ENCODE measurements at regions of chr14 and their contacts with region 1.

Region 1: DNA sequence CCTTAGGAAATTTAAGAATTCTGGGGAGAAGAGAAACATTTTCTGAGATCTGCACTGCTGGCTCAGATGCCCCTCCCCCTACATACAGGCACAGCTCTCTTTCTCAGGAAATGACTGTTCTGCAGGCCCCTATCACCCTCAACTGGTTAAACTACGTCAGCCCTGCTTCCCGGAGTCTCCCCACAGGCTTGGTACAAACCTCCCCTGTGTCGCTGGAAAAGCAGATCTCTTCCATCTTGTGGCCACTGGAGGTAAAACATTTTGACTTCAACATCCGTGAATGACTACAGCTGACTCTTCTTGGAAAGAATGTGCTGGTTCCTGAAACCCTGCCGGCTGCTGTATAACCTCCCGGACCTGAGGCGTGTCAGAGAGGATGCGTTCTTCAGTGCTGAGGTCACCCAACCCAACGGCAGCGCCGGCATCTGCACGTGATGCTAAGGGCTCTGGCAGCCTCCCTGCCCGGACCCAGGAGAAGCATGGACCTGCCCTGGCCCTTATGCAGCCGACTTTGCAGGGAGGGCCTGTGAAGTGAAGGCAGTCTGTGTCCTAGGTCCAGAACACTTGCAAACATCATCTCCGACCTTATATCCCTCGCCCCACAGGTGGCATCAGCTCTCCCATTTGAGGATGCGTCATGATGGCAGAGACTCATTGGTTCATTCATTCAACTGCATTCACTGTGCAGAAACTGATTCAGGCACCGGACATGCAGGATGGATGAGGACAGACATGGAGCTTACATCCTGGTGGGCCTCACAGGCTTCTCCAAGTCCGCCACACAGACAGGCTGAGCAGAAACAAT is 129.3 kb downstream of the GCH1 start:
- DNase-seq: peak; percentile 92
- ATAC-seq: peak; percentile 84
- H3K4me3 Mint-ChIP-seq: peak overlapping the region; percentile 63
- H3K27ac Mint-ChIP-seq: peak overlapping the region; percentile 93
- H3K4me1 Mint-ChIP-seq: peaks cover 60% of the 10 kb centered on the region
- H3K27me3 Mint-ChIP-seq: peaks cover 10% of the 10 kb centered on the region

Region 2: DNA sequence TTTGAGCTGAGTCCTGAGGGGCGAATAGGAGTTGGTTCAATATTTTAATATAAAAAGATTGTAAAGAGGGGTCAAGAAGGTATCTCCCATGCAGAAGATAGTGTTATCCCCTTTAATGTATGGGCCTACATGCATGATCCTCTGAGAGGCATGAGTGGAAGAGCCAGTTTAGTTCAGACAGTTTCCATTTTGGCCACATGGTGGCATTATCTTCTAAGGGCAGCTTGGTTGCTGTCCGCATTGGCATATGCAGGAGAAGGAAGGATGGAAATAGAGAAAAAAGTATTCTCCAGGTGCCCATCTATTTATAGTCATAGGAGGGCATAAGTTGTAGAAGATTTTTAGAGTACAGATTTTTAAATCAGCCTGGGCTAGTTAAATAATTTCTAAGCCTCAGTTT is 201.1 kb before region 1 on chr14:
- CTCF ChIA-PET with region 1: interaction called, 318 read pairs
- POLR2A ChIA-PET with region 1: interaction called, 20 read pairs
- DNase-seq: peak; percentile 48
- ATAC-seq: no peak
- H3K4me3 Mint-ChIP-seq: no peak overlapping the region
- H3K27ac Mint-ChIP-seq: no peak overlapping the region
- H3K4me1 Mint-ChIP-seq: peaks cover 12% of the 10 kb centered on the region
- H3K27me3 Mint-ChIP-seq: peaks cover 15% of the 10 kb centered on the region

Region 3: DNA sequence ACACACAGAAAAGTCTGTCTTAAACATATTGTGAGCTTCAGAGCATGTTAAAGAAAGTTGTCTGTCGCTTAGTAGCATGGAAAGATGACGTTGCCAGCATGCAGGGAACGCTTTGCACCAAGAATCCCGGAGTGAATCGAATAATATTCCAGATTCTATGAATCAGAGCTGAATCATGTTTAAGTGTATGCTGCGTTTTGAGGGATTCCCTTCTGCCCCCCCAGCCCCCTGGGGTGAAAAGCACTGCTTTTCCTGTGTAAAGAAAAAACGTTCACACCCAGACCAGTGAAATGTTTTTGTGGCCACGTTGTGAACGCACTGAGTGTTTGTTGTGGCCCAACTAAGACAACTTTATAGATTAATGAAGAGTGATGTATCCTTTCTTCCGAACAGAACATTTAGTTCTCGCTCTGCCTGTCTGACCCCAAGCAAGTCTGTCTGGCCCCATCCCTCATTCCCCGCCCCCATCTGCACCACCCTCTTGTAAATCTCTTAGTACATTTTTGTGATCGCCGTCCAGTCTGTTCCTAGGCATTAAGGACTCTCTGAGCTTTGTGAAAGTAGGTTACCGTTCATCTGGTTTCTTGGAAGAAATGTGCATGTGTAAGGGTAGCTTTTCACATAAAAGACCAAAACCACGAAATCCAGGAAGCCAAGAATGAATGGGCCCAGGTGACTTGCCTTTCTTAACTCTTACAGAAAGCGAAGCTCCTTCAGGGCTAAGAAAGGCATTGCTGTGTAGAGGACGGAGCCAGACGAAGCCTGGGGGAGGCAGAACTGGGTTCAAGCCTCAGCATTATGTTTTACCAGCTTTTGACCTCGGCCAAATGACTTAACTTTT is 103.4 kb before region 1 on chr14:
- CTCF ChIA-PET with region 1: interaction called, 21 read pairs
- POLR2A ChIA-PET with region 1: no interaction called
- DNase-seq: peak; percentile 40
- ATAC-seq: peak; percentile 65
- H3K4me3 Mint-ChIP-seq: no peak overlapping the region
- H3K27ac Mint-ChIP-seq: peak overlapping the region; percentile 10
- H3K4me1 Mint-ChIP-seq: peaks cover 35% of the 10 kb centered on the region
- H3K27me3 Mint-ChIP-seq: peaks cover 45% of the 10 kb centered on the region

Region 4: DNA sequence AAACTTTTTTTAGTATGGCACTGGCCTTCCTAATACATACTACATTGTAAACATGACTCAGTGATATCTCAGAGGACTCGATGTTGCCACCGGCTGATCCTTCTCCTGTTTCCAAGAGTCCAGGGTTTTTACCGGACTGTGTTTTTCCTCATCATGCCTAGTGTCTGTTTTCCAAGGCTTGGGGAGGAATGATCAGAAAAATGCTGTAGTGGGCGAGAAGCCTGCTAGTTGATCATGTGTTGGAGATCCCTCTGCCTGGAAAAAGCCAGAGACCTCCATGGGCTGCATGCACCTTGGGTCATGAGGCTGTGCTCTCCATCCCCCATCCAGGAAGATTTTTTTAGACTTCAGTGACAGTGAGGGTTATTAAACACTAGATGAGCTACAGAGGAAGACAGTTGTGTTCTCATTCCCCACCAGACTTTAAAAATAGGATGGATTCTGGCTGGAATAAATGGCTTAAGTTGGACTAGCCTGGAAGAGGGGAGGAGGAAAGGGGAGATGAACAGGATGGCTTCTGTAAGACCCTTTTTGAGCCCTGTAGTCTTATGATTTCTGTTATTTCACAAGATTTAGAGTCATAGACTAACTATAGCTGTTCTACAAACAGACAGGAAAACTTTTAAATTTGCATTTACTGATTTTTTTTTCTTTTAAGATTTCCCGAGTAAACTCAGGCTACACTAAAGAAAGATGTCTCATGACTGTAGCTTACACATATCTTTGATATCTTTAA is 60.7 kb before region 1 on chr14:
- CTCF ChIA-PET with region 1: interaction called, 13 read pairs
- POLR2A ChIA-PET with region 1: no interaction called
- DNase-seq: no peak
- ATAC-seq: no peak
- H3K4me3 Mint-ChIP-seq: peak overlapping the region; percentile 40
- H3K27ac Mint-ChIP-seq: peak overlapping the region; percentile 75
- H3K4me1 Mint-ChIP-seq: peaks cover 27% of the 10 kb centered on the region
- H3K27me3 Mint-ChIP-seq: peaks cover 10% of the 10 kb centered on the region

Region 5: DNA sequence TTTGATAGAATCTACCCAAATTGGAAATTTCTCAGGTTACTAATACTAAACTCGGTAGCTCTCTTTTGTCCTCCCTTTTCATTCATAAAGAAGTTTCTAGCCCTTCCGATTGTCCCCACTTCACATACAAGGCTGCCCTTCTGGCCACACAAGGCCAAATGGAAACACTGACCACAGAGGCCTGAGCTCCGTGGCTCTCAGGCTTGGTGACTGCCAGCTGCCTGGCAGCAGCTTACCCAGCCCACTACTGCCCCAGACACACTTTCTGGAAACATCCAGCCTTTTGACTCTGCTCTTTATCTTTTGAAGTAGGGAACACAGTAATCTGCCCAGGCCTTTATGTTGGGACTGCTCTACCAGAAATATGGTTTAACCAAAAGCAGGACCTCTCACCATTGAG is 37.9 kb before region 1 on chr14:
- CTCF ChIA-PET with region 1: interaction called, 46 read pairs
- POLR2A ChIA-PET with region 1: interaction called, 3 read pairs
- DNase-seq: no peak
- ATAC-seq: no peak
- H3K4me3 Mint-ChIP-seq: no peak overlapping the region
- H3K27ac Mint-ChIP-seq: no peak overlapping the region
- H3K4me1 Mint-ChIP-seq: peaks cover 82% of the 10 kb centered on the region
- H3K27me3 Mint-ChIP-seq: no peaks in the 10 kb centered on the region

Region 6: DNA sequence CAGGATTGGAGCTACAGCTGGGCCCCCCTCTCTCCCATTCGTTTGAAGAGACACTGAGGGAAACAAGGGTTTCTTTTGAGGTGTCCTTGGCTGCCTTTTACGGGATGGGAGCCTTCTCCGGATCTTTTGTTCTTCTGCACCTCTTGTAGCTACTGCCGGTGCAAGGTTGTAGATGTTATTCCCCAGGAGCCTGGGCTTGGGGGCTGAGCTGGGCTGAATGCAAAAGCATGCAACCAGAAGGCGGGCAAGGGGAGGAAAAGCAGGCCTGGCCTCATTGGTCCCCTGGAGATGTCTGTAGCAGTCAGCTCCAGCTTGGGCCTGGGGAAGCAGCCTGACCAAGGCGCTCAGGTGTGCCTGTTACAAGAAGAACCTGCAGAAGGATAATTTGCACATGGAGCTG is 18.9 kb after region 1 on chr14:
- CTCF ChIA-PET with region 1: interaction called, 16 read pairs
- POLR2A ChIA-PET with region 1: no interaction called
- DNase-seq: no peak
- ATAC-seq: no peak
- H3K4me3 Mint-ChIP-seq: no peak overlapping the region
- H3K27ac Mint-ChIP-seq: no peak overlapping the region
- H3K4me1 Mint-ChIP-seq: peaks cover 3% of the 10 kb centered on the region
- H3K27me3 Mint-ChIP-seq: peaks cover 4% of the 10 kb centered on the region

Region 7: DNA sequence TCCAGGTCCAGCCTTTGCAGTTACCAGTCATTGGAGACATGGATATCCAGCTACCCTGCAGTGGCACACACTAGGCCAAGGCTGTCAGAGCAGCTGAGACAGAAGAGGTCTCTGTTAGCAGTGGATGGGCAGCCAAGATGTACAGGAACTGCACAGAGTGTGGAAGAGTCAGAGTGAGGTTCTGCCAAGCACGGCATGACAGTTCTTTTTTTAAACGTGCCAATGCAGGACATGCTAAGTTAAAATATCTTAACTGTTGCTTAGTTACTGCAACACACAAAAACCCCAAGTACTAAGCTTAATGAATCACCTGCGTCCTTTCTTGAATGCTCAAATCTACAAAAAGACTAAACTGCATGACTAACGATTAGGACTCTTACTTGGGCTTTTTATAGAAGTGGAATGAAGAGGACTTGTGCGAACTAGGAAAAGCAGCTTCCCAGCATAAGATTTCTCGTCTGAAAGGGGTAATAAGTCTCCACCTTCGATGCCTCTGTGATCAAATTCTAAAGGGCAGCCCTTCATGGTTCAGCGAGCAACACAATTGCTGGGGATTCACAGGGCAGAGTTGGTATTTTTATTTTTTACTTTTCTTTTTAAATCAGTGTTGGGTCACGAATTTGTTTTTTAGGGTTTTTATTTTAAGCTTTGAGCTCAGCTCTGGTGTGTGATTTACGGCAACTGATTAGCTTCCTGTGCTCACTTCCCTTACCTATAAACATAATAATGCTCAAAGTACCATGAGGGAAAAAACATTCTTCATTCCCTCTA is 298.7 kb after region 1 on chr14:
- CTCF ChIA-PET with region 1: no interaction called
- POLR2A ChIA-PET with region 1: no interaction called
- DNase-seq: no peak
- ATAC-seq: peak; percentile 65
- H3K4me3 Mint-ChIP-seq: no peak overlapping the region
- H3K27ac Mint-ChIP-seq: peak overlapping the region; percentile 57
- H3K4me1 Mint-ChIP-seq: peaks cover 27% of the 10 kb centered on the region
- H3K27me3 Mint-ChIP-seq: no peaks in the 10 kb centered on the region

Region 8: DNA sequence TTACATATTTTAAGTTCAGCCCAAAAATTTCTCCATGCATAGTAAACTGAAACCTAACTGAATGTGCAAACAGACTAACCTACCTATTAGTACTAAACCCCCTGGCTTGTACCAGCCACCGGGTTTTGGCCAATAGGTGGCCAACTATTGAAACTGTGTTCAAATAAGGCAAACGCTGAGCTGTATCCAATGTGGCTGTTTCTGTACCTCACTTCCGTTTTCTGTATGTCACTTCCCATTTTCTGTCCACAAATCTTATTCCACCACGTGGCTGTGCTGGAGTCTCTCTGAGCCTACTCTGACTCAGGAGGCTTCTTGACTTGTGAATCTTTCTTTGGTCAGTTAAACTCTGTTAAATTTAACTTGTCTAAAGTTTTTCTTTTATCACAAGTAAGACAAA is 491.8 kb after region 1 on chr14:
- CTCF ChIA-PET with region 1: no interaction called
- POLR2A ChIA-PET with region 1: no interaction called
- DNase-seq: no peak
- ATAC-seq: no peak
- H3K4me3 Mint-ChIP-seq: no peak overlapping the region
- H3K27ac Mint-ChIP-seq: no peak overlapping the region
- H3K4me1 Mint-ChIP-seq: no peaks in the 10 kb centered on the region
- H3K27me3 Mint-ChIP-seq: peaks cover 2% of the 10 kb centered on the region

Measured in activated CD8-positive, alpha-beta T cell treated with anti-CD3 and anti-CD28 coated beads, Interleukin-2, amount 10 ng/mL, durations not matched to agents 7 days and 5 days (primary cell).